CD8-positive, alpha-beta T cell (primary cell): ENCODE measurements at regions of chr13 and their contacts with region 1.

Region 1: GRCh38 chr13:41456768-41457588 is at the start of gene RGCC:
- DNase-seq: peak; percentile 84 to 98 (median 94)
- ATAC-seq: peak; percentile 75
- H3K4me3 ChIP-seq: peak within 1 kb of the TSS; percentile 66 to 87
- H3K4me3 Mint-ChIP-seq: peak within 1 kb of the TSS; percentile 93
- H3K27ac ChIP-seq: peak within 1 kb of the TSS; percentile 85 to 93
- H3K27ac Mint-ChIP-seq: peak within 1 kb of the TSS; percentile 94
- H3K4me1 ChIP-seq: peaks cover 27% of the 10 kb centered on the region
- H3K4me1 Mint-ChIP-seq: peaks cover 40% of the 10 kb centered on the region
- H3K27me3 ChIP-seq: no peaks in the 10 kb centered on the region
- H3K27me3 Mint-ChIP-seq: no peaks in the 10 kb centered on the region
- CTCF ChIP-seq: no peak
- total RNA-seq, gene RGCC: 578 to 581 TPM

Region 2: DNA sequence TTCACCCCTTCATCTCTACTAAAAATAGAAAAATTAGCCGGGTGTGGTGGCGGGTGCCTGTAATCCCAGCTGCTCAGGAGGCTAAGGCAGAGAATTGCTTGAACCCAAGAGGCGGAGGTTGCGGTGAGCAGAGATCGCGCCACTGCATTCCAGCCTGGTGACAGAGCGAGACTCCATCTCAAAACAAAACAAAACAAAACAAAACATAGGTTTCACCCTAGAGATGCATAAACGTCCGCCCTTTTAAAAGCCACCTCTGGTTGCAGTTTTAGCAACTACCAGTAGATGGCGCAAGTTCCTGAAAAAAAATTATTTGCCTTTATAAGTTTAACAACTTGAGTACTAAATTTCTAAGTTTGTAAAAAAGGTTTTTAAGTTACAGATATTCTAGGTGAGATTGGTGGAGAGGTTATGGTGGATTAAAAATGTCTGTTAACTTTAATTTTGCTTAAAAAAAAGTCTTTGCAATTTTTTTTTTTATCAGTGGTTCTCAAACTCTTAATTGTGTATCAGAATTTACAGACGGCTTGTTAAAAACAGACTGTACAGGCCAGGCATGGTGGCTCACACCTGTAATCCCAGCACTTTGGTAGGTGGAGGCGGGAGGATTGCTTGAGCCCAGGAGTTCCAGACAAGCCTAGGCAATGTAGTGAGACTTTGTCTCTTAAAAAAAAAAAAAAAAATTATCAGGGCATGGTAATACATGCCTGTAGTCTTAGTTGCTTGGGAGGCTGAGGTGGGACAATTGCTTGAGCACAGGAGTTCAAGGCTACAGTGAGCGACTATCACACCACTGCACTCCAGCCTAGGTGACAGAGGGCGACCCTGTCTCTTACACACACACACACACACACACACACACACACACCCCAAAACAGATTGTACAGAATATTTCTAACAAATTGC is 103.8 kb before region 1 on chr13:
- CTCF ChIA-PET with region 1: interaction called, 6 read pairs
- POLR2A ChIA-PET with region 1: interaction called, 5 read pairs
- intact Hi-C with region 1: loop called (anchors 2 kb)
- DNase-seq: peak; percentile 21 to 83 (median 57)
- ATAC-seq: peak; percentile 55
- H3K4me3 ChIP-seq: no peak overlapping the region
- H3K4me3 Mint-ChIP-seq: peak overlapping the region; percentile 54
- H3K27ac ChIP-seq: peak overlapping the region in 1 of 2 experiments; percentile 58
- H3K27ac Mint-ChIP-seq: peak overlapping the region; percentile 94
- H3K4me1 ChIP-seq: peaks cover 49% of the 10 kb centered on the region
- H3K4me1 Mint-ChIP-seq: peaks cover 59% of the 10 kb centered on the region
- H3K27me3 ChIP-seq: no peaks in the 10 kb centered on the region
- H3K27me3 Mint-ChIP-seq: no peaks in the 10 kb centered on the region
- CTCF ChIP-seq: peak; percentile 95

Region 3: GRCh38 chr13:41492404-41493260 is 35.7 kb after region 1 on chr13:
- CTCF ChIA-PET with region 1: interaction called, 89 read pairs
- POLR2A ChIA-PET with region 1: interaction called, 26 read pairs
- intact Hi-C with region 1: loop called in 1 of 2 experiments (anchors 5 kb)
- DNase-seq: peak in 6 of 9 experiments; percentile 26 to 84 (median 63)
- ATAC-seq: peak; percentile 67
- H3K4me3 ChIP-seq: peak overlapping the region in 1 of 2 experiments; percentile 18
- H3K4me3 Mint-ChIP-seq: peak overlapping the region; percentile 75
- H3K27ac ChIP-seq: peak overlapping the region; percentile 70 to 89
- H3K27ac Mint-ChIP-seq: peak overlapping the region; percentile 99
- H3K4me1 ChIP-seq: peaks cover 70% of the 10 kb centered on the region
- H3K4me1 Mint-ChIP-seq: peaks cover 84% of the 10 kb centered on the region
- H3K27me3 ChIP-seq: no peaks in the 10 kb centered on the region
- H3K27me3 Mint-ChIP-seq: no peaks in the 10 kb centered on the region
- CTCF ChIP-seq: no peak

Region 4: DNA sequence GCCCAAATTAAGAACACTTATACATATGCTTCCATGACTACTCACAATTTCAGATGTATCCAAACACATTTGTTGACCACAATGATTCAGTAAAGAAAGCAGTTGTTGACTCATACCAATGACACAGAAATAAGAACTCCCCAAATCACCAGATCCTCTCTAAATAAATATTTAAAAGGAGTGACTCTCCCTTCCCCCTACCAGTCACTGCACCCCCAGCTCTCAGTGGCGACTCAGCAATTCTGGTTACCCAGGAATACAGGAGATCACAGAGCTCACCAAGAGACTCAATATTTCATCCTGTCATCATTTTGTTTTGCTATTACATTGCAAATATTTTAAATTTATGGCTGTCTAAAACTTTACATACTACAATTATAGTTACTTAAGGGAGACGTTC is 131.9 kb after region 1 on chr13:
- CTCF ChIA-PET with region 1: interaction called, 36 read pairs
- POLR2A ChIA-PET with region 1: interaction called, 15 read pairs
- intact Hi-C with region 1: loop called (anchors 2 to 10 kb)
- DNase-seq: peak in 1 of 9 experiments; percentile 12
- ATAC-seq: no peak
- H3K4me3 ChIP-seq: no peak overlapping the region
- H3K4me3 Mint-ChIP-seq: no peak overlapping the region
- H3K27ac ChIP-seq: no peak overlapping the region
- H3K27ac Mint-ChIP-seq: no peak overlapping the region
- H3K4me1 ChIP-seq: no peaks in the 10 kb centered on the region
- H3K4me1 Mint-ChIP-seq: peaks cover 4% of the 10 kb centered on the region
- H3K27me3 ChIP-seq: no peaks in the 10 kb centered on the region
- H3K27me3 Mint-ChIP-seq: no peaks in the 10 kb centered on the region
- CTCF ChIP-seq: no peak

Region 5: GRCh38 chr13:41780715-41781706 is 324.0 kb after region 1 on chr13:
- CTCF ChIA-PET with region 1: no interaction called
- POLR2A ChIA-PET with region 1: no interaction called
- intact Hi-C with region 1: no loop called
- DNase-seq: no peak
- ATAC-seq: no peak
- H3K4me3 ChIP-seq: no peak overlapping the region
- H3K4me3 Mint-ChIP-seq: no peak overlapping the region
- H3K27ac ChIP-seq: no peak overlapping the region
- H3K27ac Mint-ChIP-seq: no peak overlapping the region
- H3K4me1 ChIP-seq: no peaks in the 10 kb centered on the region
- H3K4me1 Mint-ChIP-seq: no peaks in the 10 kb centered on the region
- H3K27me3 ChIP-seq: no peaks in the 10 kb centered on the region
- H3K27me3 Mint-ChIP-seq: no peaks in the 10 kb centered on the region
- CTCF ChIP-seq: no peak

Region 6: DNA sequence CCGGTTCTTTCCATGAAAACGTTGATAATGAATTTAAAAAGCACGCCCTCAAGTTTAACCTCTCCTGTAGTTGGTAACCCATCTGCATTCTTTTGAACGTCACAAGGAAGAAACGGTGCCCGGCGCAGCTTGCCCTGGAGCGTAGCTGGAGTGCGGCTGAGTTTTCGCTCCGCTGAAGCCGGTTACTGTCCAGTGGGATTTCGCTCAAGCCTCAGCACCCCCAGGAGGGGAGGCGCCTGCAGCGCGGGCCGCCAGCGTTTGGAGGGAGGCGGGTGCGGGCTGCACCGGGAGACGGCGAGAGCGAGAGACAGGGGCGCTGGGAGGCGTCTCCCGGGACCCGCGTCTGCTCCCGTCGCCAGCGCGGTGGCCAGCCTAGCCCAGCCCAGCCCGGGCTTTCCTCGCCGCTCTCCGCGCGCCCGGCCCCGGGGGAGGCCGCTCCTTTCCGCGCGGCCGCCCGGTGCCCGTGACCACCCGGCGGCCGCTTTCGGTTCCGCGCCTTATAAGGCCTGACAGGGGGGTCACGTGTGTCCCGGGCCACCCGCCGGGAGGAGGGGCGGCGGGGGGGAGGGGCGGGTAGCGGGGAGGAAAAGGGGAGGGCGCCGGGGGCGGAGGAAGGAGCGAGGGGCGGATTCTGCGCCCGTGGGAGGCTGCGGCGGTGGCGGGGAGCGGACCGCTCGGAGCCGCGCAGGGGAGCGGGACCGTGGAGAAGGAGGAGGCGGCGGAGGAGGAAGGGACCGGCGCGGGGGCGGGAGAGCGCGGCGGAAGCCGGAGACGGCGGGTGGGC is 583.2 kb after region 1 on chr13:
- CTCF ChIA-PET with region 1: no interaction called
- POLR2A ChIA-PET with region 1: no interaction called
- intact Hi-C with region 1: loop called in 1 of 2 experiments (anchors 10 kb)
- DNase-seq: peak; percentile 70 to 94 (median 88)
- ATAC-seq: peak; percentile 81
- H3K4me3 ChIP-seq: peak overlapping the region; percentile 47 to 88
- H3K4me3 Mint-ChIP-seq: peak overlapping the region; percentile 91
- H3K27ac ChIP-seq: peak overlapping the region; percentile 23 to 72
- H3K27ac Mint-ChIP-seq: peak overlapping the region; percentile 72
- H3K4me1 ChIP-seq: peaks cover 9% of the 10 kb centered on the region
- H3K4me1 Mint-ChIP-seq: peaks cover 16% of the 10 kb centered on the region
- H3K27me3 ChIP-seq: no peaks in the 10 kb centered on the region
- H3K27me3 Mint-ChIP-seq: no peaks in the 10 kb centered on the region
- CTCF ChIP-seq: no peak